Naive thymus-derived CD8-positive, alpha-beta T cell (primary cell): ENCODE measurements at regions of chr15 and their contacts with region 1.

Region 1: GRCh38 chr15:92808978-92809879 is 90.9 kb upstream of the CHD2 start:
- DNase-seq: peak; percentile 98 to 100 (median 98)
- ATAC-seq: peak; percentile 75 to 77
- H3K4me3 Mint-ChIP-seq: peak overlapping the region; percentile 82 to 96 (median 93)
- H3K27ac Mint-ChIP-seq: peak overlapping the region; percentile 92 to 99 (median 99)
- H3K4me1 Mint-ChIP-seq: peaks cover 12 to 55% (median 44%) of the 10 kb centered on the region in 4 donors
- H3K27me3 Mint-ChIP-seq: no peaks in the 10 kb centered on the region

Region 2: GRCh38 chr15:92772626-92773244 is 36.5 kb before region 1 on chr15:
- POLR2A ChIA-PET with region 1: no interaction called
- DNase-seq: no peak
- ATAC-seq: no peak
- H3K4me3 Mint-ChIP-seq: no peak overlapping the region
- H3K27ac Mint-ChIP-seq: no peak overlapping the region
- H3K4me1 Mint-ChIP-seq: no peaks in the 10 kb centered on the region
- H3K27me3 Mint-ChIP-seq: no peaks in the 10 kb centered on the region

Region 3: DNA sequence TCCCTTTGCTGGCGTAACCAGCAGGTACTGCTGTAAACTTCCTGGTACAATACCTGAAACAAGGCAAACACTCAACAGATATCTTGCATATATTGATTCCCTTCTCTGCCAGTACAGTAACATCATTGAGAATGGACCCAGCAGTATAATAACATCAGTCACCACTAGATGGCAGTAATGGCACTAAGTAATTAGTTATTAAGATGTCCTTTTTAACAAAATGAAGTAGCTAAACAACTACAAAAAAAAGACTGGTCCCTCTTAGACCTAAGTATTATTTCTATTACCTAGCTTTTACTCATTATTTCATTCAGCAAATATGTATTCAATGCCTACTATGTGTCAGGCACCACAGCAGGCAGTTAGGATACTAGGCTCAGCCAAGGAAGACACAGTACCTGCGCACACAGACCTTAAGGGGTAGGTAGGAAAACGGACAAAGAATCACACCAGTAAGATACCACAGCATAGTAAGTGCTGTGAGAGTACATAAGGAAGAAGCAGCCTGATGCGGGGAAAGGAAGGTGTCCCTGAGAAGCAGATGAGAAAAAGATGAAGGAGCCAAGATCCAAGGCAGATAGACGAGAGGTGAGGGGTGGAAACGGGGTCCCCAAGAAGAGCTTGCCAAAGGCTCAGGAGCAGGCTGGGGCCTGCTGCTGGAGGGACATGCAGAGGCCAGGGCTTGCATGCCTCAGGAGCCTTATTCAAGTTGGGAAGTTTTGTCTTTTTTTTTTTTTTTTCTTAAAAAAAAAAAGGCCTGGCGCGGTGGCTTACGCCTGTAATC is 11.9 kb before region 1 on chr15:
- POLR2A ChIA-PET with region 1: interaction called, 25 read pairs
- DNase-seq: peak in 7 of 10 donors; percentile 12 to 82 (median 67)
- ATAC-seq: peak; percentile 89 to 91
- H3K4me3 Mint-ChIP-seq: peak overlapping the region in 1 of 10 donors; percentile 22
- H3K27ac Mint-ChIP-seq: peak overlapping the region; percentile 25 to 90 (median 76)
- H3K4me1 Mint-ChIP-seq: peaks cover 4 to 8% (median 7%) of the 10 kb centered on the region in 4 donors
- H3K27me3 Mint-ChIP-seq: no peaks in the 10 kb centered on the region

Region 4: DNA sequence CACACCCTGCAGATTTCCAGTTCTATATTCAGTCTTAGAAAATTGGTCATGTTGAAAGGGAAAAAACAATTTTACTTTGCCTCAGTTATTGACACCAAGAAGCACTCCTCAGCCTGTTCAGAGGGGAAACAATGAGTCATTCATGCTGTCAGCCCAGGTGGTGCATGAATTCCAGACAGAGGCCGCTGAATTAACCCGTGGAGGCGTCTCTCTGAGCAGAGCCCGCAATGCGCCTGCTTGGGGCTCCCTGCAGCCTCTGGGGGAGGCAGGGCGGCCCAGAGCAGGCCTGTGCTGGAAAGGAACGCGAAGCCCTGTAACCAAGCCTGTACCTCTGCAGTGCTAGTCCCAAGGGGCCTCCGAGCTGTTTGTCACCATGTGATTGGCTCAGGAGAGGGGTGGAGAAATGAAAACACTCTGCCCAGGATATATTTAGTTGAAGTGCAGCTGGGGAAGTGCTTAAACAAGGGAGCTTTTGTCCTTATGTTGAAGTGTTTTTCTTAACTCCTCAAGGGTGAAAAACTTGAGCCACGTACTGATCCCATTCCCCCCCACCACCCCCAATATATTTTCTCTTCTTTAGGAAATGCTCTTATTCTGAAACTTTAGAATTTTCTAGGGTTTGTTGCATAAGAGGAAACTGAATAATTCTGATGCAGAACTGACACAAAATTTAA is 22.6 kb after region 1 on chr15:
- POLR2A ChIA-PET with region 1: interaction called, 177 read pairs
- DNase-seq: peak; percentile 77 to 97 (median 87)
- ATAC-seq: peak; percentile 91 to 94
- H3K4me3 Mint-ChIP-seq: peak overlapping the region; percentile 70 to 86 (median 81)
- H3K27ac Mint-ChIP-seq: peak overlapping the region; percentile 94 to 98 (median 97)
- H3K4me1 Mint-ChIP-seq: peaks cover 18 to 55% (median 46%) of the 10 kb centered on the region in 4 donors
- H3K27me3 Mint-ChIP-seq: no peaks in the 10 kb centered on the region

Region 5: DNA sequence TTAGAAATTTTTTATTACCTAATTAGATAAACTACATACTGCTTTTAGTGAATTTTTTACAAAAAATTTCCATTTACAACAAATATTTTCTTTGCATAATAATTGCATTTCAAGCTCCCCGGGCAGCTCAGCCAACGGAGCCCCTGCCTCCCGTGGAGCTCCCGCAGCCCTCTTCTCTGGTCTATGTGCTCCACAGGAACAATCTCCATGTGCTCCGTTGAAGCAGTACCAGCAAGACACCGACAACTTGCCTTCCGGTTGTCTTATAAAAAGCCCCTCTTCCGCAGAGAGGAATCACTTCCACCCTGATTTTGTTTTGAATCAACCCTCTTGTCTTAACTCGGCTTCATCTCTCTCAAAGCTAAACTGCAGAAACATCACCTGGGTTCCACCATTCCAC is 44.0 kb after region 1 on chr15:
- POLR2A ChIA-PET with region 1: interaction called, 105 read pairs
- DNase-seq: no peak
- ATAC-seq: no peak
- H3K4me3 Mint-ChIP-seq: peak overlapping the region in 2 of 10 donors; percentile 3 to 40
- H3K27ac Mint-ChIP-seq: peak overlapping the region in 4 of 10 donors; percentile 0 to 72 (median 7)
- H3K4me1 Mint-ChIP-seq: peaks cover 15 to 42% (median 36%) of the 10 kb centered on the region in 4 donors
- H3K27me3 Mint-ChIP-seq: no peaks in the 10 kb centered on the region

Region 6: GRCh38 chr15:92903941-92904831 is 95.0 kb after region 1 on chr15:
- POLR2A ChIA-PET with region 1: interaction called, 347 read pairs
- DNase-seq: peak; percentile 98 to 100 (median 99)
- ATAC-seq: peak; percentile 78 to 85
- H3K4me3 Mint-ChIP-seq: peak overlapping the region; percentile 92 to 100 (median 98)
- H3K27ac Mint-ChIP-seq: peak overlapping the region; percentile 96 to 100 (median 100)
- H3K4me1 Mint-ChIP-seq: peaks cover 35 to 74% (median 58%) of the 10 kb centered on the region in 4 donors
- H3K27me3 Mint-ChIP-seq: no peaks in the 10 kb centered on the region

Region 7: DNA sequence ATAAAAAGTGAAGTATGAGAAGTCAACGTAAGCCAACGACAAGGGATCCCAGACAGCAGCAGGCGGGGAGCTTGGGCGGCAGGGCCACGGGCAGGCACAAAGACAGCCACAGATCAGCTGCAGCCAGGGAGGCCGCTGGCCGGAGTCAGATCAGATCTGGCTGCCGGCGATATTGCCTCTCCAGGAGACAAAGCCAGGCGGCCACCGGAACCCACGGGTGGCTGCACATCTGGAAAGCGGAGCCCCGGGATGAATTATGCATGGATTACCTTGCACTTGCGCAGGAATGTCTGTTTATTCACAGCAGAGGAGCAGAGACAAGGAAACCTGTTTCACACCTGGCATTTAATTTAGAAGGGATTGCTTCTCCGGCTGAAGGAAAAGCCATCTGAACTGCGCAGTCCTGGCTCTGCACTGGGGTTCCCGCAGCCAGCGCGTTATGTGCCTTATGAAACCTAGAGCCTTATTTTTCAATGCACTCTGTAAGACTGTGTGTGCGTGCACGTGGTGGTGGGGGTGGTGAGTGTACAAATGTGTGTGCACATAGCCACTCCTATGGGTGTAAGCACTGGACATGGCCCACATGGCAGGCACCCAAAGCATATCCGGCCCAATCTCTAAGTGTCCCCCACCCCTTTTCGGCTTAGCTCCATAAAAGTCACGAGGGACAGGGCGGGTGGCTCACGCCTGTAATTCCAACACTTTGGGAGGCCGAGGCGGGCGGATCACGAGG is 994.4 kb after region 1 on chr15:
- POLR2A ChIA-PET with region 1: no interaction called
- DNase-seq: no peak
- ATAC-seq: no peak
- H3K4me3 Mint-ChIP-seq: no peak overlapping the region
- H3K27ac Mint-ChIP-seq: no peak overlapping the region
- H3K4me1 Mint-ChIP-seq: no peaks in the 10 kb centered on the region
- H3K27me3 Mint-ChIP-seq: peaks cover 0 to 5% (median 2%) of the 10 kb centered on the region in 5 donors